Activated T-helper 1 cell treated with anti-CD3 and anti-CD28 coated beads, Interleukin-12 subunit alpha, Interleukin-12 subunit beta, Interleukin-2, Interleukin-4 antibody, amounts not matched to agents 30 ng/mL and 10 ng/mL and 1 ng/mL, durations not matched to agents 14 hours and 24 hours and 36 hours (primary cell): ENCODE measurements at regions of chr5 and their contacts with region 1.

Region 1: DNA sequence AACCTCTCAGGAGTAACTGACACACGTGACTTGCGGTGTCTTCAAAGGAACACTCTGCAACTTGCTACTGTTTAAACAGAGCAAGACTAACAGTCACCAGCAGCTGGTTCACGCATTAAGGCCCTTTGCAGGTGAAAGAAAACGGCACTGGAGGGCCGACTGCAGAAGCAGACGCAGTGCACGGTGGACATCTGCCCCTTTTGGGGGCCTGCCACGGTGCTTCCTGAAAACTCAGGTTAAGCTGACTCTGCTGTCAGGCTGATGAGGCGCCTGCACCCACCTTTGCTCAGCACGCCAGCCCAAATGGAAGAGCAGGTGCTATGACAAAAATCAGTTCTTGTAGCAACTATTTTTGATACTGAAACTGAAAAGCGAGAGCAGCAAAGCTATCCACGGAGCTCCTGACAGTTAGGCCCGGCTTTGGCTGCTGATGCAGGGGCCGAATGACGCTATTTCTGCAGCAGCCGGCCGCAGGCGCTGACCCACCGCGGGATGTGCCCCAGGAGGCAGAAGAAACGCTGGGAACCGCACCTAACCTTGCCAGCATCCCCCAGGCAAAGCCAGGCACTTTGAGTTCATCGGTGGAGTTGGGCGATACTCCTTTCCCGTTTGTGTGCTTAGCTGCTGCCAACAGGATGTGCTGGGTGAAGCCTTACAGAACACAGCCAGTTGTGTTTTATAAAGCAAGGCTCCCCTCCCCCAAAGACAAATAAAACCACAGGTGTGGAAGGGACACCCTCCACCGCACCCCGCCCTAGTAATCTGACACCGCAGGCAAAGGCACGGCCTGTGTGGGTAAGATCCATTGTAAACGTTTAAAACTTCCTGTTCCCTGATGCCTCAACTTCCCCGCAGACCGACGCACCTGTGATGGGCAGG is 21.1 kb upstream of the TERT start:
- DNase-seq: peak; percentile 56
- H3K4me3 Mint-ChIP-seq: peak overlapping the region; percentile 53
- H3K27ac Mint-ChIP-seq: peak overlapping the region; percentile 78
- H3K4me1 Mint-ChIP-seq: peaks cover 60% of the 10 kb centered on the region
- H3K27me3 Mint-ChIP-seq: no peaks in the 10 kb centered on the region

Region 2: DNA sequence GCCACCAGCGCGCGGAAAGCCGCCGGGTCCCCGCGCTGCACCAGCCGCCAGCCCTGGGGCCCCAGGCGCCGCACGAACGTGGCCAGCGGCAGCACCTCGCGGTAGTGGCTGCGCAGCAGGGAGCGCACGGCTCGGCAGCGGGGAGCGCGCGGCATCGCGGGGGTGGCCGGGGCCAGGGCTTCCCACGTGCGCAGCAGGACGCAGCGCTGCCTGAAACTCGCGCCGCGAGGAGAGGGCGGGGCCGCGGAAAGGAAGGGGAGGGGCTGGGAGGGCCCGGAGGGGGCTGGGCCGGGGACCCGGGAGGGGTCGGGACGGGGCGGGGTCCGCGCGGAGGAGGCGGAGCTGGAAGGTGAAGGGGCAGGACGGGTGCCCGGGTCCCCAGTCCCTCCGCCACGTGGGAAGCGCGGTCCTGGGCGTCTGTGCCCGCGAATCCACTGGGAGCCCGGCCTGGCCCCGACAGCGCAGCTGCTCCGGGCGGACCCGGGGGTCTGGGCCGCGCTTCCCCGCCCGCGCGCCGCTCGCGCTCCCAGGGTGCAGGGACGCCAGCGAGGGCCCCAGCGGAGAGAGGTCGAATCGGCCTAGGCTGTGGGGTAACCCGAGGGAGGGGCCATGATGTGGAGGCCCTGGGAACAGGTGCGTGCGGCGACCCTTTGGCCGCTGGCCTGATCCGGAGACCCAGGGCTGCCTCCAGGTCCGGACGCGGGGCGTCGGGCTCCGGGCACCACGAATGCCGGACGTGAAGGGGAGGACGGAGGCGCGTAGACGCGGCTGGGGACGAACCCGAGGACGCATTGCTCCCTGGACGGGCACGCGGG is 20.9 kb before region 1 on chr5 and contains the start of gene TERT:
- intact Hi-C with region 1: loop called (anchors 1 kb)
- DNase-seq: peak; percentile 63
- H3K4me3 Mint-ChIP-seq: peak within 1 kb of the TSS; percentile 72
- H3K27ac Mint-ChIP-seq: no peak within 1 kb of the TSS
- H3K4me1 Mint-ChIP-seq: peaks cover 5% of the 10 kb centered on the region
- H3K27me3 Mint-ChIP-seq: peaks cover 5% of the 10 kb centered on the region
- total RNA-seq, gene TERT: 12.3 and 12.5 TPM in 2 replicates

Region 3: GRCh38 chr5:1344975-1345838 is 29.3 kb after region 1 on chr5 and contains the start of gene CLPTM1L:
- intact Hi-C with region 1: loop called (anchors 1 kb)
- DNase-seq: peak; percentile 87
- H3K4me3 Mint-ChIP-seq: peak within 1 kb of the TSS; percentile 90
- H3K27ac Mint-ChIP-seq: peak within 1 kb of the TSS; percentile 89
- H3K4me1 Mint-ChIP-seq: peaks cover 29% of the 10 kb centered on the region
- H3K27me3 Mint-ChIP-seq: no peaks in the 10 kb centered on the region
- total RNA-seq, gene CLPTM1L: 132 and 133 TPM in 2 replicates

Region 4: GRCh38 chr5:1633605-1634336 is 317.8 kb after region 1 on chr5:
- intact Hi-C with region 1: loop called (anchors 1 kb)
- DNase-seq: peak; percentile 78
- H3K4me3 Mint-ChIP-seq: peak overlapping the region; percentile 94
- H3K27ac Mint-ChIP-seq: peak overlapping the region; percentile 89
- H3K4me1 Mint-ChIP-seq: peaks cover 19% of the 10 kb centered on the region
- H3K27me3 Mint-ChIP-seq: peaks cover 3% of the 10 kb centered on the region